BJ (cell line): ENCODE measurements at regions of chr4 and their contacts with region 1.

Region 1: DNA sequence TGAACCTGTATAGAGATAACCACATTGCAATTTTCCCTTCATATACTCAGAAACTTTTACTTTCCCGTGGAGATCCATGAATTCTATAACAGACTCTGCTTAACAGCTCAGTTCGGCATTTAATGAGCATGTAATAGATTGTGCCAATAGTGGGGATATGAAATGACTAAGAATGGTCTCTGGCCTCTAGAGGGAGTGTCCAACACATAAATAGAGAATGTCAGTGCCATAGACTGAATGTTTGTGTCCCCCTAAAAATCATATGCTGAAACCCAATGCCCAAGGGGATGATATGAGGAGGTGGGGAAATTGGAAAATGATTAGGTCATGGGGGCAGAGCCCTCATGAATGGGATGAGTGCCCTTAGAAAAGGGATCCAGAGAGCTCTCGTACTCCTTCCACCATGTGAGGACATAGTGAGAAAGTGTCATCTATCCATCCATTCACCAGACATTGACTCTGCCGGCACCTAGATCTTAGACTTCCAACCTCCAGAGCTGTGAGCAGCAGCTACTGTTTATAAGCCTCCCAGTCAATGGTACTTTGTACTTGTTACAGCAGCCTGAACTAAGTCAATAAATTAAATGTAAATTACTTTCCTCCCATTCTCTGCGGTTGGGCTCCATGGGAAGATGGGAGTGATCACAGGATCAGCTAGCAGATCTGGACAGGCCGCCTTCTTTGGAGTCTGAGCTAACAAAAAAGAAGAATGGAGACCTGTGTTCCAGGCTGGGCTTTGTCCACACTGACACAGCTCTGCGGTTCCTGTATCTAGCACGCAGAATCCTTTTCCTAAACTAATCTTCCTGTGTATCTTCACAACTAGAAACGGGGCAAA is 28.1 kb upstream of the HPSE start:
- DNase-seq: peak; percentile 6
- H3K4me3 ChIP-seq: no peak overlapping the region
- H3K27me3 ChIP-seq: peaks cover 4% of the 10 kb centered on the region; the same call in 1 of the 2 replicates
- CTCF ChIP-seq: peak; percentile 62

Region 2: GRCh38 chr4:83405844-83406816 is 43.4 kb after region 1 on chr4:
- CTCF ChIA-PET with region 1: interaction called, 3 read pairs
- POLR2A ChIA-PET with region 1: interaction called, 32 read pairs
- DNase-seq: no peak
- H3K4me3 ChIP-seq: no peak overlapping the region
- H3K27me3 ChIP-seq: no peaks in the 10 kb centered on the region
- CTCF ChIP-seq: no peak

Region 3: DNA sequence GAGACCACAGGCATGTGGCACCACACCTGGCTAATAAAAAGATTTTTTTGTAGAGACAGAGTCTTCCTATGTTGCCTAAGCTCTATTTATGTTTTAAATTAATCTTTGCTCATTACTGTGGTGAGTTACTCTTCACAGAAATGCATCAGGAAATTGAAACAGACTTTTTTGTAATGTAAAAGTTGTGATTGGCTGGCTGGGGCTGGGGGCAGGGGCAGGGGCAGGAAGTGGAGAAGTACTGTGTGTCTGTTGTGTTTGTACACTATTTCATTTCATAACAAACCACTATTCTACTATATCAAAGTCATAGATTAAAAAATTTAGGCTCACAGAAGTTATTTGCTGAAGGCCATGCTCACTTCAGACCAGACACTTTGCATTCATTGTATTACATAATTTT is 141.3 kb after region 1 on chr4:
- CTCF ChIA-PET with region 1: no interaction called
- POLR2A ChIA-PET with region 1: no interaction called
- DNase-seq: no peak
- H3K4me3 ChIP-seq: no peak overlapping the region
- H3K27me3 ChIP-seq: no peaks in the 10 kb centered on the region
- CTCF ChIP-seq: no peak